K562 (cell line): ENCODE measurements at regions of chr9 and their contacts with region 1.

Region 1: DNA sequence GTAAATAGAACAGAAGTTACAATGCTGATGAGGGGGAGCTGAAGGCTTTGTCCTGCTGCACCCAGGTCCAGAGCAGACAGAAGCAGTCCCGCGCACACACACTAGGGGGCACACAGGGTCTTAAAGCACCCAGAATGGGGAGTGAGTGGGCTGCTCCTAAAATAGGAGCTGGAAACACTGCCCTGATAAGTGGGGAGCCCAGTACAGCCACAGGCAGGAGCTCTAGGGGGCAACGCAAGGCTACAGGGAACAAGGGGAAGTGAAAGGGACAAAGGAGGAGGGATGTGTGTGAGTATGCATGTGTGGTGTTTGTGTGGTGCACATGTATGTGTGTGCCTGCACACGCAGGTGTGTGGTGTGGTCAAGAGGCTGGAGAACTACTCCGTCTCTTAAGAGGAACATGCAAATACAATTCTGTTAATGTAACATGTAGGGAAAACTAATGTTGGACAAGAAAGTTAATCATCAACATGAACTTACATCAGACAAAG is 191.5 kb downstream of the ROR2 start:
- DNase-seq: peak; percentile 71 to 80 (median 76)
- ATAC-seq: peak; percentile 99
- H3K4me3 ChIP-seq: no peak overlapping the region
- H3K27ac ChIP-seq: no peak overlapping the region
- H3K4me1 ChIP-seq: peaks cover 3 to 4% of the 10 kb centered on the region in 2 experiments; a peak in 4 of 5 replicates
- H3K27me3 ChIP-seq: no peaks in the 10 kb centered on the region
- CTCF ChIP-seq: peak; percentile 81 to 87 (median 86)
- EP300 ChIP-seq: no peak
- POLR2A ChIP-seq: no peak
- RAD21 ChIP-seq: peak; percentile 56 to 85

Region 2: DNA sequence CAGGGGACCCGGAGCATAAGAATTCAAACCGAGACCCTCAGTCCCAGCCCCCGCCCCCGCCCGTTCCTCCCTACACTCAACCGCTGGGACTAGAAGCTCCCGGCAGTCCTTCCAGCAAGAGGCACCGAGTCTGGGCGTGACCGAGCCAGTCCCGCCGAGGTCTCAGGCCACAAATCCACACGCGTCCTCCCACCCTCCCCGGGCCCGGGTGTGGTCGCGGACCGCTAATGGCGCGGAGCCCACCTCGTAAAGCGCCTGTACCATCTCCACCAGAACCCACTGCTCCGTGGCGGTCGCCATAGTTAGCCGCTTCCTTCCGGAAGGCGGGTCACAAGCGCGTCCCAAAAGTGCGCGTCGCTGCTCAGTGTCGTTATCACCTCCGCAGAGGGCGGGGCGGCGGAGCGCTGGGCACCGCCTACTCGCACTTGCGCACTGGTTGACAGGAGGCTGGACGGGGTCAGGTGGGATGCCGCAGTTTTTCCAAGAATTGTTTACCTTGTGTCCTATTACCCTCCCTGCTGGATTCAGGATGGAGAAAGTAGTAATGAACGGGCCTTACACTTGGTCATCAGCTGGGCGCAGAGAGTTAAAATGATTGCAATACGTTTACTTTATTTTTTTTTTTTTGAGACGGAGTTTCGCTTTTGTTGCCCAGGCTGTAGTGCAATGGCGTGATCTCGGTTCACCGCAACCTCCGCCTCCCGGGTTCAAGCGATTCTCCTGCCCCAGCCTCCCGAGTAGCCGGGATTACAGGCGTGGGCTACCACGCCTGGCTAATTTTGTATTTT is 356.7 kb after region 1 on chr9 and contains the start of gene SPTLC1:
- CTCF ChIA-PET with region 1: no interaction called
- POLR2A ChIA-PET with region 1: interaction called, 3 read pairs
- in situ Hi-C with region 1: no loop called
- intact Hi-C with region 1: loop called (anchors 10 kb)
- DNase-seq: peak; percentile 93 to 97 (median 94)
- ATAC-seq: peak; percentile 97
- H3K4me3 ChIP-seq: peak within 1 kb of the TSS; percentile 84
- H3K27ac ChIP-seq: peak within 1 kb of the TSS; percentile 86
- H3K4me1 ChIP-seq: peaks cover 5 to 10% of the 10 kb centered on the region in 2 experiments; a peak in 4 of 5 replicates
- H3K27me3 ChIP-seq: no peaks in the 10 kb centered on the region
- CTCF ChIP-seq: no peak
- EP300 ChIP-seq: no peak
- POLR2A ChIP-seq: peak; percentile 97
- RAD21 ChIP-seq: no peak
- polyA plus RNA-seq, gene SPTLC1: 109 to 125 TPM